CD4-positive, alpha-beta T cell (primary cell): ENCODE measurements at regions of chr11 and their contacts with region 1.

Region 1: GRCh38 chr11:13335319-13335718 is 57.7 kb downstream of the BMAL1 start:
- DNase-seq: peak; percentile 52 to 85 (median 66)
- ATAC-seq: peak; percentile 66
- H3K4me3 ChIP-seq: no peak overlapping the region
- H3K4me3 Mint-ChIP-seq: no peak overlapping the region
- H3K27ac ChIP-seq: no peak overlapping the region
- H3K27ac Mint-ChIP-seq: peak overlapping the region; percentile 2
- H3K4me1 ChIP-seq: peaks cover 68% of the 10 kb centered on the region
- H3K4me1 Mint-ChIP-seq: peaks cover 87% of the 10 kb centered on the region
- H3K27me3 ChIP-seq: no peaks in the 10 kb centered on the region
- H3K27me3 Mint-ChIP-seq: no peaks in the 10 kb centered on the region
- CTCF ChIP-seq: peak; percentile 73

Region 2: GRCh38 chr11:13210424-13210823 is 124.9 kb before region 1 on chr11:
- CTCF ChIA-PET with region 1: interaction called, 6 read pairs
- POLR2A ChIA-PET with region 1: no interaction called
- intact Hi-C with region 1: loop called in 1 of 2 experiments (anchors 1 kb)
- DNase-seq: peak in 6 of 14 experiments; percentile 17 to 59 (median 30)
- ATAC-seq: no peak
- H3K4me3 ChIP-seq: no peak overlapping the region
- H3K4me3 Mint-ChIP-seq: no peak overlapping the region
- H3K27ac ChIP-seq: no peak overlapping the region
- H3K27ac Mint-ChIP-seq: no peak overlapping the region
- H3K4me1 ChIP-seq: peaks cover 14% of the 10 kb centered on the region
- H3K4me1 Mint-ChIP-seq: peaks cover 31% of the 10 kb centered on the region
- H3K27me3 ChIP-seq: no peaks in the 10 kb centered on the region
- H3K27me3 Mint-ChIP-seq: no peaks in the 10 kb centered on the region
- CTCF ChIP-seq: peak; percentile 38

Region 3: GRCh38 chr11:13249996-13250395 is 85.3 kb before region 1 on chr11:
- CTCF ChIA-PET with region 1: interaction called, 15 read pairs
- POLR2A ChIA-PET with region 1: no interaction called
- intact Hi-C with region 1: loop called in 1 of 2 experiments (anchors 2 kb)
- DNase-seq: peak in 4 of 14 experiments; percentile 12 to 37 (median 22)
- ATAC-seq: no peak
- H3K4me3 ChIP-seq: no peak overlapping the region
- H3K4me3 Mint-ChIP-seq: no peak overlapping the region
- H3K27ac ChIP-seq: no peak overlapping the region
- H3K27ac Mint-ChIP-seq: no peak overlapping the region
- H3K4me1 ChIP-seq: no peaks in the 10 kb centered on the region
- H3K4me1 Mint-ChIP-seq: no peaks in the 10 kb centered on the region
- H3K27me3 ChIP-seq: peaks cover 8 to 9% of the 10 kb centered on the region in 2 experiments
- H3K27me3 Mint-ChIP-seq: peaks cover 16% of the 10 kb centered on the region
- CTCF ChIP-seq: peak; percentile 35

Region 4: GRCh38 chr11:13276832-13277767 is 58.2 kb before region 1 on chr11:
- CTCF ChIA-PET with region 1: interaction called, 26 read pairs
- POLR2A ChIA-PET with region 1: interaction called, 4 read pairs
- intact Hi-C with region 1: loop called (anchors 2 to 5 kb)
- DNase-seq: peak; percentile 95 to 98 (median 97)
- ATAC-seq: peak; percentile 84
- H3K4me3 ChIP-seq: peak overlapping the region; percentile 98
- H3K4me3 Mint-ChIP-seq: peak overlapping the region; percentile 97
- H3K27ac ChIP-seq: peak overlapping the region; percentile 29 to 66
- H3K27ac Mint-ChIP-seq: peak overlapping the region; percentile 85
- H3K4me1 ChIP-seq: peaks cover 34% of the 10 kb centered on the region
- H3K4me1 Mint-ChIP-seq: peaks cover 49% of the 10 kb centered on the region
- H3K27me3 ChIP-seq: no peaks in the 10 kb centered on the region
- H3K27me3 Mint-ChIP-seq: no peaks in the 10 kb centered on the region
- CTCF ChIP-seq: no peak

Region 5: GRCh38 chr11:13287036-13287435 is 48.3 kb before region 1 on chr11:
- CTCF ChIA-PET with region 1: interaction called, 13 read pairs
- POLR2A ChIA-PET with region 1: no interaction called
- intact Hi-C with region 1: loop called in 1 of 2 experiments (anchors 5 kb)
- DNase-seq: peak in 3 of 14 experiments; percentile 25 to 39 (median 38)
- ATAC-seq: peak; percentile 72
- H3K4me3 ChIP-seq: no peak overlapping the region
- H3K4me3 Mint-ChIP-seq: no peak overlapping the region
- H3K27ac ChIP-seq: no peak overlapping the region
- H3K27ac Mint-ChIP-seq: peak overlapping the region; percentile 7
- H3K4me1 ChIP-seq: peaks cover 47% of the 10 kb centered on the region
- H3K4me1 Mint-ChIP-seq: peaks cover 91% of the 10 kb centered on the region
- H3K27me3 ChIP-seq: no peaks in the 10 kb centered on the region
- H3K27me3 Mint-ChIP-seq: no peaks in the 10 kb centered on the region
- CTCF ChIP-seq: no peak

Region 6: GRCh38 chr11:14672635-14673034 is 1337.3 kb after region 1 on chr11:
- CTCF ChIA-PET with region 1: no interaction called
- POLR2A ChIA-PET with region 1: no interaction called
- intact Hi-C with region 1: no loop called
- DNase-seq: no peak
- ATAC-seq: no peak
- H3K4me3 ChIP-seq: no peak overlapping the region
- H3K4me3 Mint-ChIP-seq: peak overlapping the region; percentile 4
- H3K27ac ChIP-seq: no peak overlapping the region
- H3K27ac Mint-ChIP-seq: peak overlapping the region; percentile 48
- H3K4me1 ChIP-seq: no peaks in the 10 kb centered on the region
- H3K4me1 Mint-ChIP-seq: peaks cover 92% of the 10 kb centered on the region
- H3K27me3 ChIP-seq: no peaks in the 10 kb centered on the region
- H3K27me3 Mint-ChIP-seq: no peaks in the 10 kb centered on the region
- CTCF ChIP-seq: no peak